K562 (cell line): ENCODE measurements at regions of chr15 and their contacts with region 1.

Region 1: GRCh38 chr15:78241007-78241406 is 6.6 kb upstream of the ACSBG1 start:
- DNase-seq: peak; percentile 86 to 89 (median 86)
- ATAC-seq: peak; percentile 94
- H3K4me3 ChIP-seq: no peak overlapping the region
- H3K27ac ChIP-seq: no peak overlapping the region
- H3K4me1 ChIP-seq: peaks cover 19 to 21% of the 10 kb centered on the region in 2 experiments
- H3K27me3 ChIP-seq: peaks cover 0 to 3% of the 10 kb centered on the region in 2 experiments; a peak in 1 of 5 replicates
- CTCF ChIP-seq: peak; percentile 84 to 93 (median 88)
- EP300 ChIP-seq: no peak
- POLR2A ChIP-seq: no peak
- RAD21 ChIP-seq: peak; percentile 91 to 93

Region 2: GRCh38 chr15:77959432-77959879 is 281.6 kb before region 1 on chr15:
- CTCF ChIA-PET with region 1: interaction called, 4 read pairs
- POLR2A ChIA-PET with region 1: no interaction called
- in situ Hi-C with region 1: loop called (anchors 5 kb)
- intact Hi-C with region 1: loop called (anchors 5 kb)
- DNase-seq: peak; percentile 84 to 90 (median 90)
- ATAC-seq: peak; percentile 100
- H3K4me3 ChIP-seq: no peak overlapping the region
- H3K27ac ChIP-seq: no peak overlapping the region
- H3K4me1 ChIP-seq: peaks cover 0 to 5% of the 10 kb centered on the region in 2 experiments; a peak in 3 of 5 replicates
- H3K27me3 ChIP-seq: peaks cover 5 to 13% of the 10 kb centered on the region in 2 experiments; a peak in 3 of 5 replicates
- CTCF ChIP-seq: peak; percentile 93 to 96 (median 95)
- EP300 ChIP-seq: no peak
- POLR2A ChIP-seq: no peak
- RAD21 ChIP-seq: peak; percentile 93 to 94

Region 3: DNA sequence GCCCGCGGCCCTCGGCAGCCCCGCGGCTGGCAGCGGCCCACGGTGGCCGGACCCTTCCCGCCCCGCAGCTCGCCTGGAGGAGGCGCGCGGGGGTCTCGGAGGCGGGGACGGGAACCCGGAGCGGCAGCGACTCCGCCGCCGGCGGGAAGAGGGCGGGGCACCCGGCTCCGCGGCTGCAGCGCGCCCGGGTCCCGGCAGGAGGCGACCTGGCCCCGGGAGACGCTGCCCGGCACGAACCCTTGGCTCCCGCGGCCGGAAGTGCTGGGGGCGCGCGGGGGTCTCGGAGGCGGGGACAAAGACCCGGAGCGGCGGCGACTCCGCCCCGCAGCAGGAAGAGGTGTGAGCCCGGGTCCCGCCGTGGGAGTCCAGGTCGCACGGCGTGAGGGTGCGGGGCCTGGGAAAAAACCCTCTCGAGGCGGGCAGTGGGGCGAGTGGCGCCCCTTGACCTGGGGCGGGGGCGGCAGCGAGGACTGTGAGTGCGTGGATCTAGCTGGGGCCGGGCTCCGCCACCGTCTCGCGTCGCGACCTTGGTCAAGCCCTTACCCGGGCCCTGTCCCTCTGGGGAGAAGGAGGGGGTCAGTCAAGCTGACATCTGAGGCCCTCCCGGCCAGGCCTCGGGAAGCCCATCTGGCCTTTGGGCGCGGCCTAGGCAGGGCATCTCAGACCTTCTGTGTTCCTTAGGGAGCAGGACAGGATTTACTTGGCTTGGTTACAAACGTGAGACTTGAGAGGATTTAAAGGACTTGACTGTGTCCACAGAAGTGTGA is 109.5 kb before region 1 on chr15 and contains the start of gene CIB2:
- CTCF ChIA-PET with region 1: interaction called, 10 read pairs
- POLR2A ChIA-PET with region 1: no interaction called
- in situ Hi-C with region 1: no loop called
- intact Hi-C with region 1: loop called (anchors 5 kb)
- DNase-seq: peak; percentile 85 to 96 (median 94)
- ATAC-seq: peak; percentile 92
- H3K4me3 ChIP-seq: peak within 1 kb of the TSS; percentile 69
- H3K27ac ChIP-seq: peak within 1 kb of the TSS; percentile 81
- H3K4me1 ChIP-seq: peaks cover 25 to 31% of the 10 kb centered on the region in 2 experiments
- H3K27me3 ChIP-seq: no peaks in the 10 kb centered on the region
- CTCF ChIP-seq: peak; percentile 59 to 88 (median 80)
- EP300 ChIP-seq: no peak
- POLR2A ChIP-seq: peak; percentile 83
- RAD21 ChIP-seq: peak; percentile 75 to 76
- polyA plus RNA-seq, gene CIB2: 1.5 to 2.0 TPM

Region 4: DNA sequence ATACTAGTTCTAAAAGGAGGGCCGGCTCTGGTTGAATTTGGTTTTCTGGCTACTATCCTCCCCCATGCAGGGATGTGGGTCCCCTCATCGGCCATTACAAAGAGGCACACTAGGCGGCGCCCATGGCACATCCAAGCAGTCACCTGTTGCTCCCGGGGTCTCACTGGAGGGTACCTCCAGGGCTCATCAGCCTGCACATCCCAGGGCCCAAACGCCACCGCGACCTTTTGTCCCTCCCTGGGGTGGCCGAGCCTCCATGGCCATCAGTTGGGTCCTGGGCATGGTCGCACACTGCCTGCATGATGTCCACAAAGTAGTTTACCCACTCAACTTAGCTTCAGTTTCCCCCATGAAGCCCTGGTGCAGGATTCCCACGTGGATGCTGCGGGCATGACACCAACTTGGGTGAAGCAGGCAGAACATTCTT is 63.5 kb before region 1 on chr15:
- CTCF ChIA-PET with region 1: interaction called, 17 read pairs
- POLR2A ChIA-PET with region 1: no interaction called
- in situ Hi-C with region 1: no loop called
- intact Hi-C with region 1: loop called (anchors 1 kb)
- DNase-seq: peak; percentile 61 to 72 (median 67)
- ATAC-seq: peak; percentile 84
- H3K4me3 ChIP-seq: no peak overlapping the region
- H3K27ac ChIP-seq: no peak overlapping the region
- H3K4me1 ChIP-seq: peaks cover 3 to 30% of the 10 kb centered on the region in 2 experiments; a peak in 3 of 5 replicates
- H3K27me3 ChIP-seq: peaks cover 4 to 11% of the 10 kb centered on the region in 2 experiments; a peak in 3 of 5 replicates
- CTCF ChIP-seq: peak; percentile 77 to 86 (median 82)
- EP300 ChIP-seq: no peak
- POLR2A ChIP-seq: no peak
- RAD21 ChIP-seq: peak; percentile 57 to 84

Region 5: DNA sequence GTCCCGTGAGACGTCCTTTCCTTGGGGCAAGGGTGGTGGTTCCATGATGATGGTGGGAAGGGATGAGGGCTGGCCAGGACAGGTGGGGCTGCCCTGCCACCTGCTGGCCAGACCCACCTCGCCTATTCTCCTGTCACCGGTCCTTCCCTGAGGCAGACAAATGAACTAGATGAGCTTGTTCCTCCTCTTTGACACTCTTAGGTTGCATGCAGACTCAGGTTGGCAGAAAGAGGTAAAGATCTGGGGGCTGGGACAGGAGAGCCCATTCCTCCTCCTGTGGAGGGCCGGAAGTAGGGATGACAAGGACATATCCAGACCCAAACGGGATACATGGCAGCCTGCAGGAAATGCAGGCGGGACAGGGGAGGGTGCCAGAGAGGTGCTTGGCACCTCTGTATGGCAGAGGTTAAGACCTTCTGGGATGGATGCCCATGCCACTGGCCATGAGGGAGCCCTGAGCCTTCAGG is 45.2 kb before region 1 on chr15:
- CTCF ChIA-PET with region 1: interaction called, 5 read pairs
- POLR2A ChIA-PET with region 1: no interaction called
- in situ Hi-C with region 1: no loop called
- intact Hi-C with region 1: loop called (anchors 5 kb)
- DNase-seq: peak; percentile 60 to 75 (median 71)
- ATAC-seq: peak; percentile 95
- H3K4me3 ChIP-seq: no peak overlapping the region
- H3K27ac ChIP-seq: no peak overlapping the region
- H3K4me1 ChIP-seq: peaks cover 0 to 4% of the 10 kb centered on the region in 2 experiments; a peak in 1 of 5 replicates
- H3K27me3 ChIP-seq: peaks cover 6 to 29% of the 10 kb centered on the region in 2 experiments; a peak in 4 of 5 replicates
- CTCF ChIP-seq: peak; percentile 85 to 90 (median 88)
- EP300 ChIP-seq: no peak
- POLR2A ChIP-seq: no peak
- RAD21 ChIP-seq: peak; percentile 82 to 93

Region 6: GRCh38 chr15:78223396-78224022 is 17.5 kb before region 1 on chr15:
- CTCF ChIA-PET with region 1: no interaction called
- POLR2A ChIA-PET with region 1: no interaction called
- in situ Hi-C with region 1: no loop called
- intact Hi-C with region 1: no loop called
- DNase-seq: no peak
- ATAC-seq: no peak
- H3K4me3 ChIP-seq: no peak overlapping the region
- H3K27ac ChIP-seq: no peak overlapping the region
- H3K4me1 ChIP-seq: no peaks in the 10 kb centered on the region
- H3K27me3 ChIP-seq: peaks cover 0 to 2% of the 10 kb centered on the region in 2 experiments; a peak in 3 of 5 replicates
- CTCF ChIP-seq: no peak
- EP300 ChIP-seq: no peak
- POLR2A ChIP-seq: no peak
- RAD21 ChIP-seq: no peak

Region 7: DNA sequence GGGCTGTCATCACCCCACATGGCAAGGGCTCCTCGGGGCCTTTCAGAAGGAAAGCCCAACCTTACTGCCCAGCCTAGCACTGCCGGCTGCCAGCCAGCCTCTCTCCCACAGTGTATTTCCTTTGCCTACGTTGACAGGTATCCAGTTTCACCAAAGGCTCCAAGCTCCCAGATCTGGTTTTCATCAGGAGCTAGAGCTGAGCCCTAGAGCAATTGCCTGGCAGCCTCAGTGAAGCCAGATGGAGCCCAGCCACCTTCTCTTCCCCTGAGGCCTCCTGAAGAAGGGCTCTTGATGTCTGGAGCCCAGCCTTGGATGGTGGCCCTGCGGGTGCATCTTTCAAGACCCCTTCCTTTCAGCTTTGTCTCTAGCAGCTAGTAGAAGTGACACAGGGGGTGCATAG is 119.4 kb after region 1 on chr15:
- CTCF ChIA-PET with region 1: no interaction called
- POLR2A ChIA-PET with region 1: no interaction called
- in situ Hi-C with region 1: no loop called
- intact Hi-C with region 1: no loop called
- DNase-seq: no peak
- ATAC-seq: no peak
- H3K4me3 ChIP-seq: no peak overlapping the region
- H3K27ac ChIP-seq: no peak overlapping the region
- H3K4me1 ChIP-seq: no peaks in the 10 kb centered on the region
- H3K27me3 ChIP-seq: peaks cover 26 to 48% of the 10 kb centered on the region in 2 experiments
- CTCF ChIP-seq: no peak
- EP300 ChIP-seq: no peak
- POLR2A ChIP-seq: no peak
- RAD21 ChIP-seq: no peak